HepG2 (cell line): ENCODE measurements at regions of chr14 and their contacts with region 1.

Region 1: GRCh38 chr14:61694830-61695694 is at the start of gene HIF1A:
- DNase-seq: peak; percentile 93
- ATAC-seq: peak; percentile 96
- H3K4me3 ChIP-seq: peak within 1 kb of the TSS; percentile 85 to 100 (median 97)
- H3K27ac ChIP-seq: peak within 1 kb of the TSS; percentile 98
- H3K4me1 ChIP-seq: peaks cover 31% of the 10 kb centered on the region
- H3K27me3 ChIP-seq: no peaks in the 10 kb centered on the region; a peak in 1 of 5 replicates
- CTCF ChIP-seq: peak; percentile 36
- EP300 ChIP-seq: peak in 1 of 2 experiments; percentile 37; a peak in 2 of 4 replicates
- POLR2A ChIP-seq: peak; percentile 93 to 97
- RAD21 ChIP-seq: no peak
- total RNA-seq, gene HIF1A: 126 and 211 TPM in 2 replicates

Region 2: GRCh38 chr14:61461808-61462275 is 233.2 kb before region 1 on chr14:
- CTCF ChIA-PET with region 1: no interaction called
- POLR2A ChIA-PET with region 1: no interaction called
- in situ Hi-C with region 1: no loop called
- intact Hi-C with region 1: loop called (anchors 5 kb)
- DNase-seq: peak; percentile 68
- ATAC-seq: peak; percentile 79
- H3K4me3 ChIP-seq: no peak overlapping the region
- H3K27ac ChIP-seq: no peak overlapping the region
- H3K4me1 ChIP-seq: peaks cover 39% of the 10 kb centered on the region
- H3K27me3 ChIP-seq: no peaks in the 10 kb centered on the region; a peak in 1 of 5 replicates
- CTCF ChIP-seq: peak; percentile 79
- EP300 ChIP-seq: no peak
- POLR2A ChIP-seq: no peak
- RAD21 ChIP-seq: peak; percentile 81

Region 3: DNA sequence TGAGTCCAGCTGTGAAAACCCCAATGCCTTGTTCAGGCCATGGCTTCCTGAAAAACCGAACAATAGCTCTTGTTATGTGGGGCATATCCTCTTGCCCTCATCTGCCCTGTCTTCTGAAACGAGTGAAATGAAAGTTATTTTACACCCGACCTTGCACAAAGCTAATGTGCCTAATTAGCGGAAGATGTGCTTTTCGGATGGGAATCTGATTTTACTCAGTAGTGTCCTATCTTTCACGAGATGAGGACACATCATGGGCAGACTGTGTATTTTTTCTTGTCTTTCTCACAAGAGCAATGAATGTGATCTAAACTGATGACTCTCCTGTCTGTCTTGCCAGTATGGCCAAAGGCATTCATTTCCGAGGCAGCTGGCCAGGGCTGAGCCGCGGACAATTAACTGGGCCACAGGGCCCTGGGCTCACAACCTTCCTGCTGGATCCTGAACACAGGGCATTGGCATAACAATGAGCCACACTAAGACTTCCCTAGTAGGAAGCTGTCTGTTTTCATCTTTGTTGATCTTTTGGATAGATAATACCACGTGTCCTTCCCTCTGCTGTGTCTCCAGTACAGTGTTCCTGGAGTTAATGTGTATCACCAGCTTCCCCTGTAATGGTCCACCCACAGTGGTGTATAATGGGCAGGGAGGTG is 85.7 kb before region 1 on chr14:
- CTCF ChIA-PET with region 1: no interaction called
- POLR2A ChIA-PET with region 1: interaction called, 6 read pairs
- in situ Hi-C with region 1: loop called (anchors 10 kb)
- intact Hi-C with region 1: loop called (anchors 2 kb)
- DNase-seq: peak; percentile 63
- ATAC-seq: peak; percentile 72
- H3K4me3 ChIP-seq: peak overlapping the region; percentile 29 to 59 (median 46)
- H3K27ac ChIP-seq: peak overlapping the region; percentile 43
- H3K4me1 ChIP-seq: peaks cover 39% of the 10 kb centered on the region
- H3K27me3 ChIP-seq: no peaks in the 10 kb centered on the region
- CTCF ChIP-seq: no peak
- EP300 ChIP-seq: no peak; a peak in 1 of 4 replicates
- POLR2A ChIP-seq: no peak
- RAD21 ChIP-seq: no peak

Region 4: GRCh38 chr14:61710853-61711817 is 16.1 kb after region 1 on chr14:
- CTCF ChIA-PET with region 1: no interaction called
- POLR2A ChIA-PET with region 1: interaction called, 15 read pairs
- in situ Hi-C with region 1: no loop called
- intact Hi-C with region 1: no loop called
- DNase-seq: peak; percentile 32
- ATAC-seq: peak; percentile 11; the same call in 2 of the 3 replicates
- H3K4me3 ChIP-seq: no peak overlapping the region
- H3K27ac ChIP-seq: no peak overlapping the region
- H3K4me1 ChIP-seq: peaks cover 72% of the 10 kb centered on the region
- H3K27me3 ChIP-seq: no peaks in the 10 kb centered on the region
- CTCF ChIP-seq: no peak
- EP300 ChIP-seq: 0 out of 4 replicates have a peak, but pooled peaks of 1 of the 2 experiments have one; percentile 31
- POLR2A ChIP-seq: no peak
- RAD21 ChIP-seq: no peak

Region 5: DNA sequence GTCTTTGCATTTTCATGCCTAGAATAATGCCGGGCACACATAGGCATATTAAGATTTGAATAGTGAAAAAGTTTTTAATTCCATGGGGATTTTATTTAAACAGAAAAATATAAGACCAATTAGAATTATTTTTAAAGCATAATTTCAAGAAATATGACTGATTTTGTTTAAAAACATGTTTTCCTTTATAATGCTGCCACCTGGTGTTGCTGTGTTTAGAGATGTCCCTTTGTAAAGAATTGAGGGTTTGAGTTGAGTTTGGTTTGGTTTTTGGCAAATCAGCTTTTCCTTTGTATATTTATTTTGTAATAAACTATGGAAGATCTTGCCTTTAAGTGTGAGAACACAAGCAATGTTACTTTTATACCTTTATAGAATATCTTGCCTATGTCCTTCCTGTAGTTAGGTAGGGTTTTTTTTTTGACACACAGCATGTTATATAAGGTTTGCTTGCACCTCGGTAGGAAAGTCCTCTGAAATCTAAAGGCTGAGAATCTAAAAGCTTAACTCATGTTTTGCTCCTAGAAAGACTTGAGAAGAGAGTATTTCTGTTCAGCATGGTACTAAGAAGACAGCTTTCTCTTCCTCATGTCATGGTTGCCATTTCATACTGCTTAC is 35.8 kb after region 1 on chr14:
- CTCF ChIA-PET with region 1: no interaction called
- POLR2A ChIA-PET with region 1: no interaction called
- in situ Hi-C with region 1: no loop called
- intact Hi-C with region 1: loop called (anchors 5 kb)
- DNase-seq: no peak
- ATAC-seq: no peak
- H3K4me3 ChIP-seq: no peak overlapping the region
- H3K27ac ChIP-seq: no peak overlapping the region
- H3K4me1 ChIP-seq: no peaks in the 10 kb centered on the region
- H3K27me3 ChIP-seq: no peaks in the 10 kb centered on the region
- CTCF ChIP-seq: peak; percentile 25; the same call in 1 of the 2 replicates
- EP300 ChIP-seq: no peak
- POLR2A ChIP-seq: no peak
- RAD21 ChIP-seq: 0 out of 2 replicates have a peak, but pooled peaks have one; percentile 15